Mammary epithelial cell (primary cell): ENCODE measurements at regions of chr7 and their contacts with region 1.

Region 1: DNA sequence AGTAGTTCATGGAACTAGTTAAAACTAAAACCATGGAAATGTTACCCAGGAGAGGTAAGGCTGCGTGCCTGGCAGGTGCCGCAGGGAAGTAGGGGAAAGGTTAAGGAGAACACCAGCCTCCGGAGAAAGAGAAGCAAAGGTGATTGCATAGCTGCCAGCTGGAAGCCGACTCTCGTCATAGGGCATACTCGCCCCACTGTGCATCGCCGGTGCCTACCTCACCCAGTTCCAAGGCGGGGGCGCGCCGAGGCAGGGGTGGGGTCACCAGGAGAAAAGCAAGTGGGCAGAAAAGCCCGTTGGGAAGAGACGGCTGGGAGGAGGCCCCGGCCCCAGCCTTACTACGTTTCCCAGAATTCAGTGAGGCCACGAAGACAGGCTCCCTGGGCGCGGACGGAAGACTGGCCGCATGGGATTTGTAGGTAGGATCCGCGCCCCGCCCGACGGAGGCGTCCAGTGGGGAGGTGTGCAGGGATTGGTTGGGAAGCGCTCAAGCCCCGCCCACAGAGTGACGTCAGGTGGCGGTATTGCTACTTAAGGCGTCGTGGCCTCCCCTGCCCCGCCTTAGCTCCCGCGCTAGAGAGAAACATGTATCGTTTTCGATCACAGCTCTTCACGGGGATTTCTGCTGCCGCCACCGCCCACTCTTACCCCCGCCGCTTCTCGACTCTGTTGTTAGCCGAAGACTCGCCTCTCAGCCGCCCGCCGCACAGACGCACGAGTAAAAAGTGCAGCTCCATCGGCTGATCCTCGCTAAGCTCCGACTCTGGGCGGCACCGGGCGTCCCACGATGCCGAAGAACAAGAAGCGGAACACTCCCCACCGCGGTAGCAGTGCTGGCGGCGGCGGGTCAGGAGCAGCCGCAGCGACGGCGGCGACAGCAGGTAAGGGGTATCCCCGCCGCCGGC is at the start of gene IFRD1:
- DNase-seq: peak; percentile 98
- H3K4me3 ChIP-seq: peak within 1 kb of the TSS; percentile 80 to 100 (median 96)
- H3K27ac ChIP-seq: peak within 1 kb of the TSS; percentile 81
- H3K4me1 ChIP-seq: peaks cover 31% of the 10 kb centered on the region
- H3K27me3 ChIP-seq: no peaks in the 10 kb centered on the region
- CTCF ChIP-seq: no peak
- total RNA-seq, gene IFRD1: 74.2 to 76.2 TPM

Region 2: DNA sequence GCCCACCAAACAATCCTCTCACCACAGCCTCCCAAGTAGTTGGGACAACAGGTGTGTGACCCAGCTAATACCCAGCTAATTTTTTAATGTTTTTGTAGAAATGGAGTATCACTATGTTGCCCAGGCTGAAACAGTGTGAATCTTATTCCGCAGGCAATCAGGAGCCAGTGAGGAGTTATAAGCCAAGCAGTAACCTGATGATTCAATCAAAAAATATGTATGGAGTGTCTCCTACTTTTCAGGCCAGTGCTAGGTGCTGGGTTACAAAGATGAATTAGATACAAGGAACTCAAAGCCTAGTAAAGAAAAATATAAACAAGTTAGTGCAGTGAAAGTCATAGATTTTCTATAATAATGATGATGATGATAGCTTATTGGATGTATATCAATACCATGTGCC is 13.1 kb before region 1 on chr7:
- CTCF ChIA-PET with region 1: no interaction called
- dilution Hi-C with region 1: no loop called
- in situ Hi-C with region 1: no loop called
- intact Hi-C with region 1: loop called (anchors 1 kb)
- DNase-seq: peak; percentile 24
- H3K4me3 ChIP-seq: no peak overlapping the region
- H3K27ac ChIP-seq: no peak overlapping the region
- H3K4me1 ChIP-seq: peaks cover 15% of the 10 kb centered on the region
- H3K27me3 ChIP-seq: no peaks in the 10 kb centered on the region
- CTCF ChIP-seq: no peak

Region 3: DNA sequence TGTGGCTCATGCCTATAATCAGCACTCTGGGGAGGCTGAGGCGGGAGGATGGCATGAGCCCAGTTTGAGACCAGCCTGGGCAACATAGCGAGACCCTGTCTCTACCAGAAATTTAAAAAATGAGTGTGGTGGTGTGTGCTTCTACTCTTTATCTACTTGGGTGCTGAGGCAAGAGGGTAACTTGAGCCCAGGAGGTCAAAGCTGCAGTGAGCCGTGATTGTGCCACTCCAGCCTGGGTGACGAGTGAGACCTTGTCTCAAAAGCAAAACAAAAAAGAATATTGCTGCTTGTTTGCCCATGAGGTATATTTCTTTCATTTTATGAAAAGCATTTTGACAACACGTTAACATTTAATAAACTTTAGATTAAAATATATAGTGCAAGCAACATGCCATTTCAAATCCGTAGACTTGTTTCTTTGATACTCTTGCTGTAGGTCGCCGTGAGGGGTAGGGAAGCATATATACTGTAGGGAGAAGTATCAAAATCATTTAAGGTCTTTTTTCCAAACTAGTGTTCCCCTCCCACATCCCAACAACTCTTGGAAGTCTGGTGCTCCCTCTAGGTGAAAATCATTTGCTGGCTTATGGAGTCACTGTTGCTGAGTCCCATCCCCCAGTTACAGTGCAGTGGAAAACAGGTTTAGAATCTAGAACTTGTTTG is 26.4 kb after region 1 on chr7:
- CTCF ChIA-PET with region 1: no interaction called
- dilution Hi-C with region 1: no loop called
- in situ Hi-C with region 1: no loop called
- intact Hi-C with region 1: no loop called
- DNase-seq: no peak
- H3K4me3 ChIP-seq: no peak overlapping the region
- H3K27ac ChIP-seq: no peak overlapping the region
- H3K4me1 ChIP-seq: peaks cover 10% of the 10 kb centered on the region
- H3K27me3 ChIP-seq: no peaks in the 10 kb centered on the region
- CTCF ChIP-seq: no peak